ENCODE measurements at regions of chr5 and their contacts with region 1.

Region 1: DNA sequence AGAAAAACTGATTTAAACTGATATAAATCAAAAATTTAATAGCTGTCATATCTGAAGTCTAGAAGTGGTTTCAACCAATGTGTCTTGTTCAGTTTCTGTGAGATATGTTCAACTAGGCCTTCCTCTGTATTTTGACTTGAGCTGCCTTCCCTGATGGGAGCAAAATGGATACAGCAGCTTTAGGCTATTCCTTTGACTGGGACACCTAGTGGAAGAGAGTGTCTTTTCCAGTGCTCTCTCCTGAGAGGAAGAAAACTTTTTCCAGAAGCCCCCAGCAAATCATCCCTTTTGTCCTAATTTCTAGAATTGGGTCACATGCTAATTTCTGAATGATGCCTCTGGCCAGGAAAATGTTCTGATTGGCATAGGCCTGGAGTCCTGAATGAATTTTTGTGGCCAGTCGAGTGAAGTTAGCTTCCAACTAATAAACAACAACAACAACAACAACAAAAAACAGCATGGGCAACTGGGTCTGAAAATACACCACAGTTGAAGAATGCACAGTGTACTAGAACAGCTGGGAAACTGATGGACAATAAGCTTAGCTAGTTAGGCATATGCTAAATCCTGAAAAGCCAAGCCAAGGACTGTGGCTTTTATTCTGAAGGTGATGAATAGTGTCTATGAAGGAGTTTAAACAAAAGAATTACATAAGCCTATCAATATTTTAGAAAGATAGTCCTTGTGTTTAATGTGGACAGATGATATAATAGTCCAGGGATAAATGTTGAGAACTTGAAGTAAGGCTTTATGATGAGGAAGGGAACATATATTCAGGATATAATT is 125.7 kb downstream of the FBN2 start:
- DNase-seq: no peak
- H3K4me3 ChIP-seq: no peak overlapping the region
- H3K27ac ChIP-seq: no peak overlapping the region
- H3K4me1 ChIP-seq: 0 out of 7 replicates have a peak, but pooled peaks cover 0 to 3% (median under 1%) of the 10 kb centered on the region in 4 experiments
- H3K27me3 ChIP-seq: no peaks in the 10 kb centered on the region
- CTCF ChIP-seq: peak in 1 of 3 experiments; percentile 29; a peak in 1 of 4 replicates
- EP300 ChIP-seq: no peak
- POLR2A ChIP-seq: no peak
- RAD21 ChIP-seq: 0 out of 4 replicates have a peak, but pooled peaks of 1 of the 2 experiments have one; percentile 8

Region 2: DNA sequence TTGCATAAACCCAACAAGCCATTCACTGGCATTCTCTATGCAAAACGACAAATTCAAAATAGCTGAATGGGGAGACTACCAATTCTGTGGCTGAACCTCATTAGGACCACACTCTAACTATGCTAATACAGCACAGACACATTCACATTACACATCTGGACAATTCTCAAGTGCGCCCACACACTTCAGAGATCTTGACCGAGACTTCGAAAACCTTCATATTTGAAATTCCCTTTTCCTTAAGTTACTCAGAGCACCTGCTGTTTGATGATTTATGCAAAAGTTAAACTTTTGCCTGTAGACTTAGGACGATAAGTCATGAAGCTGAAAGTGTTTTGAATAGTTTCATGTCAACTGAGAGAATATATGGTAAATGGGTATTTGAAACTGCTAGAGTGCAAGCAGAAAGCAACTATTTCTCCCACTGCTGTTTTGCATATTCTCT is 13.8 kb after region 1 on chr5:
- CTCF ChIA-PET with region 1: interaction called, 19 read pairs
- POLR2A ChIA-PET with region 1: no interaction called
- DNase-seq: no peak
- H3K4me3 ChIP-seq: no peak overlapping the region
- H3K27ac ChIP-seq: no peak overlapping the region
- H3K4me1 ChIP-seq: peaks cover 0 to 4% (median 0%) of the 10 kb centered on the region in 4 experiments; a peak in 2 of 7 replicates
- H3K27me3 ChIP-seq: no peaks in the 10 kb centered on the region
- CTCF ChIP-seq: no peak
- EP300 ChIP-seq: no peak
- POLR2A ChIP-seq: no peak
- RAD21 ChIP-seq: no peak

Measured in H1 (cell line).